ENCODE measurements at regions of chr2 and their contacts with region 1.

Region 1: GRCh38 chr2:26628921-26629625 is 12.1 kb downstream of the CIB4 start:
- DNase-seq: peak; percentile 28 to 61
- ATAC-seq: no peak
- H3K4me3 ChIP-seq: no peak overlapping the region
- H3K27ac ChIP-seq: no peak overlapping the region
- H3K4me1 ChIP-seq: no peaks in the 10 kb centered on the region
- H3K27me3 ChIP-seq: no peaks in the 10 kb centered on the region

Region 2: GRCh38 chr2:26495705-26496297 is 133.3 kb before region 1 on chr2:
- intact Hi-C with region 1: no loop called
- DNase-seq: no peak
- ATAC-seq: no peak
- H3K4me3 ChIP-seq: no peak overlapping the region
- H3K27ac ChIP-seq: no peak overlapping the region
- H3K4me1 ChIP-seq: no peaks in the 10 kb centered on the region
- H3K27me3 ChIP-seq: no peaks in the 10 kb centered on the region

Region 3: DNA sequence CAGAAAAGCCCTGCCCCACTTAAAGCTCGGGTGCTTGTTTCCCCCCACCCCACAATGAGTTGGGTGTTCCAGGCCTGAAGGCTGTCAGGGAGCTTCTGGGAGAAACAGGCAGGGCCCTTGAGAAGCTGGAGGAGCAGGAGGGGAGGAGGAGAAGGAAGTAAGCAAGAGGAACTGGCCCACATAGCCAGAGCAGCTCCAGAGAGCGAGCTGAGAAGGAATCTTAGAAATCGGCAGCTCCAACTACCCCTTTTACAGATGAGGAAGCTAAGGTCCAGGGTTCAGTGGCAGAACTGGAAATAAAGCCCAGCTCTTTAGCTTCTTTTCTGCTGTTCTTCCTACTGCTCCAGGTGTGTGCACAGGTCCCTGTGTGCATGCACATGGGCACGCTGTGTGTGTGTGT is 50.8 kb after region 1 on chr2:
- intact Hi-C with region 1: loop called in 1 of 2 experiments (anchors 5 kb)
- DNase-seq: peak in 1 of 2 donors; percentile 23
- ATAC-seq: no peak
- H3K4me3 ChIP-seq: no peak overlapping the region
- H3K27ac ChIP-seq: no peak overlapping the region
- H3K4me1 ChIP-seq: no peaks in the 10 kb centered on the region
- H3K27me3 ChIP-seq: no peaks in the 10 kb centered on the region

Measured in aorta (tissue), 5 donors.